Posterior vena cava (tissue), 2 donors: ENCODE measurements at regions of chr2 and their contacts with region 1.

Region 1: DNA sequence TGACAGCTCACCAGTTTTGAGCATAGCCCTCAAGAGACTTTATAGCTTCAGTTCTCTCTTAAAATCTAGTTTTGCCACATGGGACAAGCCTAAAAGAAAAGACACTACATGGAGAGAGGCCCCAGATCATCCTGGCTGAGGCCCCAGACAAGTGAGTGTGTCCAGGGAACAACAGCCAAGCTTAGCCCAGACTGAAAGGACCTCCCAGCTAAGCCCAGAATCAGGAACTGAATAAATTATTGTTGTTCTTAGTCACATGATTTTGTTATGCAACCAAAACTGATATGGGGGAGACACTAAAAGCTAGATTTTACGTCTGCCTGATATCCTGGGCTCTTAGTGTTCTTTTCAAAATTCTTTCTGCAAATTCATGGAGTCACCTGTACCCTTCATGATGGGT is 29.3 kb upstream of the LBH start:
- DNase-seq: no peak

Region 2: DNA sequence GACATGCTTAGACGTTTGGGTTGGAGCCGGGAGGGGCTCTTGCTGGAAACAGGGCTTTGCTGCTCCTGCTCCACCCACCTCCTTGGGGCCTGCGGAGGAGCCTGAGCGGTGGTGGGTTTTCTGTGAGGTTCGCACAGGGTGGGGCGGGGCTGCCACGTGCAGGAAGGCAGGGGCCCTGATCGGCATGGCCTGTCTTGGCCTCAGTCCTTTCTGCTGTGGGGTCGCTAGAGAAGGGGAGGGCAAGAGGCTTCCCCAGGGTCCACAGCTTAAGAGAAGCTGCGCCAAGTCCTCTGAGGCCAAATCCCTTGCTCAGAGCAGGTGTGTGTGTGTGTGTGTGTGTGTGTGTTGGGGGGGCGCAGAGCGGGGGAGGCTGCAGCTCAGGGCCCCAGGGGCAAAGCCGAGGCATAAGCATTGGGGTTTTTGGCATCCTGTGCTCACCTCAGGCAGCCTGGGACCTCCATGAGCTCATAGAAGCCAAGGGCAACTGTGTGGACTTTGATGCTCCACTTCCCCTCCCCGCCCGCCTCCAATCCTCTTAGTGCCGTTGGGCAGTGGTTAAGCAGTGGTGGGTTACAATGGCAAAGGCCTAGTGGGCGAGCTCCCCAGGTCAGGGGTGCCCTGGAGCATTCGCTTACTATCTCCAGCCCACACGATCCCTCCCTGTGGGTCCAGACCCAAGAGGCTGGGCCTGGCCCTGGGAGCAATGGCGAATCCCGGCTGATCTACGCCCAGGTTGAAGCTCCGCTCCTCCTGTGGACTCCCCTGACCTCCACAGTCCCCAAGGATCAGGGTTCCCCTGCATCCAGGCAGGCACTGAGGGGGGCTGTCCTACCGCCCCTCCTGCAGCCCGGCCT is 1192.1 kb before region 1 on chr2:
- intact Hi-C with region 1: loop called in 1 of 2 experiments (anchors 5 kb)
- DNase-seq: no peak

Region 3: DNA sequence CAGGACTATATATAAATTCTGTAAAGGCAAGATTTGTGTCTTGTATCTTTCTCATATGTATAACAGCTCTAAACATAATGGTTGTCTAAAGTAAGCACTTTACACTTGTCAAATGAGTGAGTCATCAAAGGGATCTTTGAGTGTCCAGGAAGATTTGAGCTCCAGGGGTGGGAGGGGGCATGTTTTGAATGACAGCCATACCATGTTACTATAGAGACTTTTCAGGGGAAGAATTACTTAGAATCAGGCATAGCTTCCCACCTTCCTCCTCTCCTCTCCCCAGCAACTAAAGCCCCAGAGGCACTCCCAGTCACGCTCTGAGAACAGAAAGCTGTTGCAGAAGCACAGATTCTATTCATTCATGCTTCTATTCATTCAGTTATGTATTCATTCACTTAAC is 214.8 kb before region 1 on chr2:
- intact Hi-C with region 1: no loop called
- DNase-seq: no peak

Region 4: DNA sequence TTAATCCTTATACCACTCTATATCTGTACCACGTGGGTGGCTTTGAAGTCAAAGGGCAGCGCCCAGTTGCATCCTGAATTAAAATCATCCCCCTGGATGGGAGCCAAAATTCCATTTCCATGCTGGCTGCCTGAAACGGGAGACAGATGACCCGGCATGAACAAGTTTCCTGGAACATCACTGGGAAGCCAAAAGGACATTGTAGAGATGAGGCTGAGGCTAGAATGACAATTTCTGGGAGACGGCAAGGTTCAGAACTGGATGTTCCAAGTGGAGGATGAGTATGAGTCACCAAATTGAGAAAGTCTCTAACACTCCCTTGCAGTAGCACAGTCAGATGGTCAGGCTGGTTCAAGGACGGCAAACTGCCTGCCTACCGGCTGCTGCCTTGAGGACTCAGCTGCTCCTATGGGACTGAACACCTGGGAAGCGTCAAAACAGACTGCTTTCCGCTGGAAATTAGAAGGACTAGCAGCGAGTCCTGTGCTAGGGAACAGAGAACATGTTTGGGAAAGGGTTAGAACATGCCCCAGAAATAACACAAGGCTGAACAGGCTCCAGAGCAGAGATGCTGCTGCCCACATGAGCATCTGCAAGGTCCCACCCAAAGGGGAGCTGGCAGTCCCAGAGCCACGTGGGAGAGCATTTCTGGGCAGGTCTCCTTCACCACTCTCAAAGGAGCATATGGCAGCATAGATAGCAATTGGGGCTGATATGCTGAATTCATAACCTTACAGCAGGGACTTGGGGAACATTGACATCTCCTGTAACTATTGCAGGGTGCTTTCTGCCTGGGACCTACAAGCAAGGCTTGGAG is 23.2 kb before region 1 on chr2:
- intact Hi-C with region 1: loop called in 1 of 2 experiments (anchors 1 kb)
- DNase-seq: peak; percentile 86